ENCODE measurements at regions of chr9 and their contacts with region 1.

Region 1: GRCh38 chr9:110623462-110624025 is 44.0 kb upstream of the SVEP1 start:
- DNase-seq: peak; percentile 53 to 59
- ATAC-seq: peak; percentile 59 to 81; a peak in 5 of 6 replicates
- H3K4me3 ChIP-seq: no peak overlapping the region
- H3K27ac ChIP-seq: no peak overlapping the region
- H3K4me1 ChIP-seq: no peaks in the 10 kb centered on the region
- CTCF ChIP-seq: peak; percentile 83
- EP300 ChIP-seq: no peak
- POLR2A ChIP-seq: no peak
- RAD21 ChIP-seq: peak; percentile 84 to 92

Region 2: DNA sequence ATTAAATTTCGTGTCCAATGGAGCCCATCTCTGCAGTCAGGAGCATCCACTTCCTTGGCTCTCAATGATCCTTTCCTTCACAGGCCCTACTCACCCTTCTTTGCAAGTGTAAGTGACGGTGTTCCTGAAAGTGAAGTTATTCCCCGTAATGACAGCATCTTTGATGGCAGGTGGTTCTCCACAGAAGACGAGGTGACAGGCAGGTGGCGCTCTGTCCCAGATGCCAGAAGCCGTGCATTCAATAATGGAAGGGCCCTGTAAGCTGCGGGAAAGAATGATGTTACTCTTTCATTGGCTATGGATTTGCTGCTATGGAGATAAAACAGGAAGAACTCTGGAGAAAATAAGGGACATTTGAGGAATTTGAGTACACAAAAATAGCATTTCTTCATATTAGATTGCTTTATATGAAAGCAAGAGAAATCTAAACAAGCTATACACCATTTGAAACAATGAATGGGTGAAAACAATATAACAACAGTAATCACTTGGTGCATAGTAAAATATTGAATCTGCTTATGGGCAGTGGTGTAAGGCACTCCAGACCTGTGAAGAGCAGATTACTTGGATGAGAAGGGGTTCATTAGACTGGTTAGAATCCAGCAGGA is 195.9 kb before region 1 on chr9:
- CTCF ChIA-PET with region 1: interaction called, 19 read pairs
- POLR2A ChIA-PET with region 1: no interaction called
- DNase-seq: peak; percentile 34 to 60
- ATAC-seq: peak; percentile 84 to 86
- H3K4me3 ChIP-seq: no peak overlapping the region
- H3K27ac ChIP-seq: 0 out of 6 replicates have a peak overlapping the region, but pooled peaks of 1 of the 2 experiments have one; percentile 32
- H3K4me1 ChIP-seq: no peaks in the 10 kb centered on the region
- CTCF ChIP-seq: peak; percentile 61
- EP300 ChIP-seq: no peak
- POLR2A ChIP-seq: no peak
- RAD21 ChIP-seq: peak; percentile 66 to 71

Region 3: GRCh38 chr9:110604171-110604601 is 19.4 kb before region 1 on chr9:
- CTCF ChIA-PET with region 1: interaction called, 20 read pairs
- POLR2A ChIA-PET with region 1: no interaction called
- DNase-seq: no peak
- ATAC-seq: no peak
- H3K4me3 ChIP-seq: no peak overlapping the region
- H3K27ac ChIP-seq: no peak overlapping the region
- H3K4me1 ChIP-seq: peaks cover 4% of the 10 kb centered on the region; the same call in 1 of the 3 replicates
- CTCF ChIP-seq: no peak
- EP300 ChIP-seq: no peak
- POLR2A ChIP-seq: no peak
- RAD21 ChIP-seq: no peak

Region 4: GRCh38 chr9:110688329-110688728 is 64.8 kb after region 1 on chr9:
- CTCF ChIA-PET with region 1: no interaction called
- POLR2A ChIA-PET with region 1: no interaction called
- DNase-seq: no peak
- ATAC-seq: no peak
- H3K4me3 ChIP-seq: no peak overlapping the region
- H3K27ac ChIP-seq: no peak overlapping the region
- H3K4me1 ChIP-seq: no peaks in the 10 kb centered on the region
- CTCF ChIP-seq: no peak
- EP300 ChIP-seq: no peak
- POLR2A ChIP-seq: no peak
- RAD21 ChIP-seq: no peak

Measured in A549 (cell line).